Spleen (tissue), 13 donors: ENCODE measurements at regions of chr5 and their contacts with region 1.

Region 1: GRCh38 chr5:170338933-170339779 is 41.6 kb upstream of the LCP2 start:
- DNase-seq: peak; percentile 85
- H3K4me3 ChIP-seq: no peak overlapping the region
- H3K27ac ChIP-seq: peak overlapping the region in 3 of 8 donors; percentile 32 to 95 (median 90)
- H3K4me1 ChIP-seq: peaks cover 6 to 61% (median 44%) of the 10 kb centered on the region in 6 donors
- H3K27me3 ChIP-seq: no peaks in the 10 kb centered on the region
- CTCF ChIP-seq: peak; percentile 66 to 92 (median 82)
- POLR2A ChIP-seq: no peak

Region 2: DNA sequence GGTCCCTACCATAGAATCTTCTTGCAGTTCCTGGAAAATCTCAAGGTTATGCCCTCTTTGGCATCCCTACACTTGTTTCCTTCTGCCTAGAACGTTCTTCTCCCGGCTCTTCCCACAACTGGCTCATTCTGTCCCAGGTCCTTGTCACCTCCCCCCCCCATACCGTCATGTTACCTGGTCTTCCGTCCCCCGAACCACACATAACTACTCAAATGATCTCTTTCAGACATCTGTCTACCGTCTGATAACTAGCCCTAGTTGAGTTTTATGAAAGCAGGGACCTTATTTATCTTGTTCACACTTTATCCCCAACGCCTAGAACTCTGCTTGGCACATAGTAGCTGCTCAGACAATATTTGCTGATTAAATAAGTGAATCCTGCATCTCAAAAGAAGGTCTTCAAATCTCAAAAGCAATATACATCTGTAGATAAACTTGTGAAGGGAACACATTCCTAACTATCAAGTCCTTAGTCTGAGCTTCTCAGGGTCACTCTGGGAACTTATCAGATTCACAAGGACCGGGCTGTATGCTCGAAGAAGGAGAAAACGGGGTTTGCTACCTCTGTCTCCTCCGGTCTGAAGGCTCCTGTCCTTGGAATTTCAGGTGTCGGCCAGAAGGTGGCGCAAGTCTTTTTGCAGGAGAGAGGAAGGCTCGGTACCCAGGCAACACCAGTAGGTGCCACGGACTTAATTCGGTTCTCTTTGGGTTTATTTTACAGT is 71.6 kb before region 1 on chr5:
- intact Hi-C with region 1: loop called (anchors 5 kb)
- DNase-seq: peak; percentile 91
- H3K4me3 ChIP-seq: peak overlapping the region in 2 of 8 donors; percentile 10 to 42
- H3K27ac ChIP-seq: peak overlapping the region; percentile 48 to 99 (median 85)
- H3K4me1 ChIP-seq: peaks cover 42 to 100% (median 76%) of the 10 kb centered on the region in 6 donors
- H3K27me3 ChIP-seq: peaks cover 0 to 10% (median 0%) of the 10 kb centered on the region in 7 donors
- CTCF ChIP-seq: peak; percentile 70 to 92 (median 87)
- POLR2A ChIP-seq: no peak

Region 3: DNA sequence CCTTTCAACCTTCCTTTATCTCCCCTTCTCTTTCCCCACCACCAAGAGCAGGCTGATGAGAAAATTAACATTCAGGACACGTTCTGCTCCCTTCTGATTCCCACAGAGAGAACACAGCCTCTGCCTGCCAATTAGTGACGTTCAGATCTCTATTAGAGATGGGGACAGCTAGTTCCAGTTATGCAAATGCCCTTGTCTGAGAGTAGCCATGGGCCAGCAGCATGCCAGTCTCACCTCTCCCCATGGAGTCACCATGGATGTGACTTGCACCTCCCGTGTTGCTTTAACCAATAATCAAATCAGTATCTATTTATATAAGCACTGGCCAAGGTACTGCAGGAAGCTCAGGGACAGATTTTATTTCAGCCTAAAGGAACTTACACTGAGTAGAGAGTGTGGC is 225.9 kb after region 1 on chr5:
- intact Hi-C with region 1: no loop called
- DNase-seq: no peak
- H3K4me3 ChIP-seq: no peak overlapping the region
- H3K27ac ChIP-seq: no peak overlapping the region
- H3K4me1 ChIP-seq: no peaks in the 10 kb centered on the region
- H3K27me3 ChIP-seq: peaks cover 0 to 48% (median 0%) of the 10 kb centered on the region in 7 donors
- CTCF ChIP-seq: no peak
- POLR2A ChIP-seq: no peak